Activated CD8-positive, alpha-beta T cell treated with anti-CD3 and anti-CD28 coated beads for 36 hours (primary cell): ENCODE measurements at regions of chrX and their contacts with region 1.

Region 1: DNA sequence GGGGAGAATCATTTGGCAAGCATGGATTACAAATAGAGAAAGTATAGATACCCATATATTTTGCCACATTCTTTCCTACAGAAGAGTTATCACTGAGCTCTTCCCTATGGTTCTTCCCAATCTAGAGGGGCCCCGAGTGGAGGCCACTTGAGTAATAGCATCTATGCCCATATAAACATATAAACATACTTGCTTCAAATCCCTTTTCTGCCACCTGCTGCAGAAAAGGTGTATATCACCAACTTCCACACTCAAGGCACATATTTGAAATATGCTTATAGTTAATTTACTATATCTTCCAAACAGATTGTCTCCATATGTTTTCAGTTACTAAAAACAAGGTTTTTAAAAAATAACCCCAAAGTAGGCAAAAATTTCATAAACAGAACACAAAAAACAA is 642.8 kb upstream of the DIPK2B start:
- DNase-seq: no peak
- ATAC-seq: no peak
- H3K4me3 Mint-ChIP-seq: no peak overlapping the region
- H3K27ac Mint-ChIP-seq: peak overlapping the region; percentile 78
- H3K4me1 Mint-ChIP-seq: peaks cover 48% of the 10 kb centered on the region
- H3K27me3 Mint-ChIP-seq: no peaks in the 10 kb centered on the region
- CTCF ChIP-seq: peak; percentile 21

Region 2: GRCh38 chrX:45801554-45801953 is 42.0 kb before region 1 on chrX:
- CTCF ChIA-PET with region 1: interaction called, 15 read pairs
- POLR2A ChIA-PET with region 1: interaction called, 27 read pairs
- intact Hi-C with region 1: loop called (anchors 2 kb)
- DNase-seq: no peak
- ATAC-seq: peak; percentile 51
- H3K4me3 Mint-ChIP-seq: peak overlapping the region; percentile 25
- H3K27ac Mint-ChIP-seq: peak overlapping the region; percentile 72
- H3K4me1 Mint-ChIP-seq: peaks cover 73% of the 10 kb centered on the region
- H3K27me3 Mint-ChIP-seq: no peaks in the 10 kb centered on the region
- CTCF ChIP-seq: peak; percentile 29

Region 3: GRCh38 chrX:45868425-45868824 is 24.9 kb after region 1 on chrX:
- CTCF ChIA-PET with region 1: no interaction called
- POLR2A ChIA-PET with region 1: no interaction called
- intact Hi-C with region 1: no loop called
- DNase-seq: no peak
- ATAC-seq: no peak
- H3K4me3 Mint-ChIP-seq: no peak overlapping the region
- H3K27ac Mint-ChIP-seq: no peak overlapping the region
- H3K4me1 Mint-ChIP-seq: peaks cover 16% of the 10 kb centered on the region
- H3K27me3 Mint-ChIP-seq: peaks cover 1% of the 10 kb centered on the region
- CTCF ChIP-seq: no peak